Breast epithelium (tissue), 4 donors: ENCODE measurements at regions of chr4 and their contacts with region 1.

Region 1: DNA sequence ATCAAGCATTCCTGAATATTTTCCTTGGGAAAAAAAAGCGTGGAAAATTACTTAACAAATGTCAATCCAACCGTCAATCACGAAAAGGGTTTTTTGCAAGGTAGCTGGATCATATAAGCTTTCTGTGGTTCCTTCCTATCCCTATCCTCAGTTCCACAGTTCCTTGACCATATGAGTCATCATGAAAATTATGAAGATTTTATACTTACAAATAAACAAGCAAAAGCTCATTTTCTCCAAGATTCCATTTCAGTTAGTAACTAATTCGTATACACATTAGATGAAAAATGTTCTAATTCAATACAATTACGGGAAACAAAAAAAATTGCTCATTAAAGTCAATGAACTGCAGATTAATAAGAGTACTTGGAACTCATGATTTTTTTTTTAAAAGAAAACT is 228.8 kb downstream of the NSUN7 start:
- DNase-seq: no peak
- H3K4me3 ChIP-seq: no peak overlapping the region
- H3K27ac ChIP-seq: no peak overlapping the region
- H3K4me1 ChIP-seq: no peaks in the 10 kb centered on the region
- H3K27me3 ChIP-seq: no peaks in the 10 kb centered on the region
- CTCF ChIP-seq: no peak
- POLR2A ChIP-seq: no peak

Region 2: DNA sequence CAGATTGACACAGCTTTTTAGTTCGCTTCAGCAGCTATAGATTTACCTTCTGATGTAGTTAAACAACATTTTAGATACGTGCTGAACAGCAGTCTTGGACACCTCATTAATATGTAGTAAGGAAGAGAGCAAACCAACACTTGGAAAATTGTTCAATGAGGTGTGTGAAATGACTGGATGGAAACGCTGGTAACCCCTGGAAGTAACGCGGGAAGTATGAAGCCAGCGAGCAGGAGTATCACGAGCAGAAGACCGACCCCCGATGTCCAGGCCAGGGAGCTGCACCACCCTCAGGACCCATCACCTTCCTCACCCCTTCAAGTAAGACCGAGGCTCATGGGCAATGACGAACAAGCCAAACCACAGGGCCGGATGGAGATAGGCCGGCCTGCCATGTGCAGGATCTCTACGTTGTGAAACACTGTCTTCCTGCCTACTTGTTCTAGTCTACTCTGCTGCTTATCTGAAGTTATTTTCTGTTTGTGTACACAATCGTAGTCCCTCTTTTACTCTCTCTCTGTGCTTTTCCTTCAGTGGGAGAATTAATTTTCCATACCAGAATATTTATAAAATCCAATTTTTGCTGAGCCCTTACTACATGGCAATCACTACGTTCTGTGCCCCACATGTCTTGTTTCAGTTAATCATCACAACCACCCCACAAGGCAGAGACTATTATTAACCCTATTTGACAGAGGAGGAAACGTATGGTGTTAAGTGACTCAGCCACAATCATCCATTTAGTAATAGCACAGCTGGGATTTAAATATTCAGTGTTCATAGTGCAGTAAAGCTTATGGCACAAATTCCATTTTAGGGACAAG is 14.1 kb after region 1 on chr4:
- intact Hi-C with region 1: no loop called
- DNase-seq: no peak
- H3K4me3 ChIP-seq: no peak overlapping the region
- H3K27ac ChIP-seq: no peak overlapping the region
- H3K4me1 ChIP-seq: no peaks in the 10 kb centered on the region
- H3K27me3 ChIP-seq: no peaks in the 10 kb centered on the region
- CTCF ChIP-seq: no peak
- POLR2A ChIP-seq: no peak

Region 3: DNA sequence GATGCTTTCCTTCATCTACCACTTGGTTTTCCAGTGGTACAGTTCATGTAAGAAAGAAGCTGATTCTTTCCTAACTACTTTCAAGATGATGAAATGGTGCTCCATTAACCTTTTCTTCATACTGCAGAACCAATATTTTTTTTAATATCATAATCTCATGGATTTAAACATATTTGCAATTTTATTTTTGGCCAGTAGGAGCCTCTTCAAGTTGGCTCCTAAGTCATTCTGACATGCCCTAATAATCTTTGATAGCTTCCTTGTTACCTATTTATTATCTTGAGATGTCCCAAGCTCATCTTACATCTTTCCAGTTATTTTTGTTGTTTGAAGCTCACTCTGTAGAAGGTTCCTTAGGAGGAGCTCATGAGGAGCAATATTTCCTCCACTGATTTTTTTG is 65.6 kb after region 1 on chr4:
- intact Hi-C with region 1: loop called (anchors 2 kb)
- DNase-seq: no peak
- H3K4me3 ChIP-seq: no peak overlapping the region
- H3K27ac ChIP-seq: no peak overlapping the region
- H3K4me1 ChIP-seq: no peaks in the 10 kb centered on the region
- H3K27me3 ChIP-seq: no peaks in the 10 kb centered on the region
- CTCF ChIP-seq: peak in 1 of 3 donors; percentile 12
- POLR2A ChIP-seq: no peak

Region 4: DNA sequence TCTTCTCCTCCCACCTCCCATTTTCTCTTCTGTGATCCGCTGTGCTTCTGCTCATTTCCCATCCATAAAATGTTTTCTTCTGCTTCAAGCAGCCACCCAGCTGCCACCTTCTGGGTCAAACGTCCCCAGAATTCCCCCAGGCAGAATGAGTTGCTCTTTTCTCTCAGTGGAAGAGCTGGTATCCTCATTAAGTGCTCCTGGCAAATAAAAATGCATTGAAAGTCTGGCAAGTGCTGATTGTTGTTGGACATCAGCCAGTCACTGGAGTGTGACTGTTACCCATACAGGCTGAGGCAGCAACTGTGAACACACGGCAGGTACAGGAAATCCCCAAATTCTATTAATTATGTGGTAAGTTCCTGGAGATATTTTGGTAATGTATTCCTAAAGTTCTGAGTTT is 612.0 kb after region 1 on chr4:
- intact Hi-C with region 1: no loop called
- DNase-seq: peak in 1 of 2 donors; percentile 34
- H3K4me3 ChIP-seq: no peak overlapping the region
- H3K27ac ChIP-seq: peak overlapping the region; percentile 40 to 43
- H3K4me1 ChIP-seq: no peaks in the 10 kb centered on the region
- H3K27me3 ChIP-seq: no peaks in the 10 kb centered on the region
- CTCF ChIP-seq: no peak
- POLR2A ChIP-seq: no peak